Calu3 (cell line): ENCODE measurements at regions of chr12 and their contacts with region 1.

Region 1: GRCh38 chr12:6873094-6874014 is at the start of gene SPSB2:
- DNase-seq: peak; percentile 99
- H3K4me3 Mint-ChIP-seq: peak within 1 kb of the TSS; percentile 99
- H3K27ac Mint-ChIP-seq: peak within 1 kb of the TSS; percentile 89
- H3K4me1 Mint-ChIP-seq: peaks cover 41% of the 10 kb centered on the region
- H3K27me3 Mint-ChIP-seq: no peaks in the 10 kb centered on the region
- CTCF ChIP-seq: no peak
- total RNA-seq, gene SPSB2: 18.0 and 21.5 TPM in 2 replicates

Region 2: GRCh38 chr12:6851921-6852650 is 21.3 kb before region 1 on chr12 and contains the start of gene USP5:
- CTCF ChIA-PET with region 1: interaction called, 15 read pairs
- intact Hi-C with region 1: no loop called
- DNase-seq: peak; percentile 97
- H3K4me3 Mint-ChIP-seq: peak within 1 kb of the TSS; percentile 94
- H3K27ac Mint-ChIP-seq: peak within 1 kb of the TSS; percentile 89
- H3K4me1 Mint-ChIP-seq: peaks cover 27% of the 10 kb centered on the region
- H3K27me3 Mint-ChIP-seq: no peaks in the 10 kb centered on the region
- CTCF ChIP-seq: no peak
- total RNA-seq, gene USP5: 126 and 128 TPM in 2 replicates

Region 3: GRCh38 chr12:6884539-6884938 is 11.2 kb after region 1 on chr12:
- CTCF ChIA-PET with region 1: interaction called, 11 read pairs
- intact Hi-C with region 1: no loop called
- DNase-seq: no peak
- H3K4me3 Mint-ChIP-seq: no peak overlapping the region
- H3K27ac Mint-ChIP-seq: no peak overlapping the region
- H3K4me1 Mint-ChIP-seq: peaks cover 23% of the 10 kb centered on the region
- H3K27me3 Mint-ChIP-seq: no peaks in the 10 kb centered on the region
- CTCF ChIP-seq: no peak

Region 4: GRCh38 chr12:6890789-6891645 is 17.7 kb after region 1 on chr12:
- CTCF ChIA-PET with region 1: interaction called, 31 read pairs
- intact Hi-C with region 1: loop called (anchors 1 kb)
- DNase-seq: peak; percentile 99
- H3K4me3 Mint-ChIP-seq: peak overlapping the region; percentile 70
- H3K27ac Mint-ChIP-seq: peak overlapping the region; percentile 81
- H3K4me1 Mint-ChIP-seq: peaks cover 15% of the 10 kb centered on the region
- H3K27me3 Mint-ChIP-seq: no peaks in the 10 kb centered on the region
- CTCF ChIP-seq: peak; percentile 77

Region 5: GRCh38 chr12:6927379-6928024 is 54.1 kb after region 1 on chr12 and contains the start of gene ATN1:
- CTCF ChIA-PET with region 1: interaction called, 24 read pairs
- intact Hi-C with region 1: loop called (anchors 5 kb)
- DNase-seq: peak; percentile 71
- H3K4me3 Mint-ChIP-seq: peak within 1 kb of the TSS; percentile 83
- H3K27ac Mint-ChIP-seq: peak within 1 kb of the TSS; percentile 68
- H3K4me1 Mint-ChIP-seq: peaks cover 67% of the 10 kb centered on the region
- H3K27me3 Mint-ChIP-seq: no peaks in the 10 kb centered on the region
- CTCF ChIP-seq: no peak
- total RNA-seq, gene ATN1: 59.9 and 62.0 TPM in 2 replicates

Region 6: DNA sequence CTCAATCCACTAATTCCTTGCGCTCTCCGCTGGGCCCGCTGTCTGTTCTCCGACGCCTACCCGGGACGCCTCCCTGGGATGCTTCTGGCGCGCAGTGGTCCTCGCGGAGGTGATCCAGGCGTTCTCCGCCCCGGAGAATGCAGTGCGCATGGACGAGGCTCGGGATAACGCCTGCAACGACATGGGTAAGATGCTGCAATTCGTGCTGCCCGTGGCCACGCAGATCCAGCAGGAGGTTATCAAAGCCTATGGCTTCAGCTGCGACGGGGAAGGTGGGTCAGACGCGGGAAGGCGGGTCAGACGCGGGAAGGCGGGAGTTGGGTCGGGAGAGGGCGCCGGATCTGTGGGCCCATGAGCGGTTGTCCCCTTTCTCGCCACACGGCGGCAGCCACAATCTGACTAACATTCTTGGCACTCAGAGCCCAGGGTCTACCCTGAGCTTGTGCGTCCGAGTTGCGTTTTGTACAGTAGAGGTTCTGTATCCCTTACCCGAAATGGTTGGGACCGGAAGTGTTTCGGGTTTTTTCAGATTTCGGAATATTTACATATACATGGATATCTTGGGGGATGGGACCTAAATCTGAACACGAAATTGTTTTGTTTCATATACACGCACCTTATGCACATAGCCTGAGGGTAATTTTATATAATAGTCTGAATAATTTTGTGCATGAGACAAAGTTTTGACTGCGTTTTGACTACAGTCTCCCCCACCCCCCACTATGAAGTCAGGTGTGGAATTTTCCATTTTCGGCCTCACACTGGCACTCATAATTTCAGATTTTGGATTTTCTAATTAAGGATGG is 71.2 kb after region 1 on chr12:
- CTCF ChIA-PET with region 1: interaction called, 13 read pairs
- intact Hi-C with region 1: loop called (anchors 5 kb)
- DNase-seq: peak; percentile 93
- H3K4me3 Mint-ChIP-seq: peak overlapping the region; percentile 87
- H3K27ac Mint-ChIP-seq: peak overlapping the region; percentile 100
- H3K4me1 Mint-ChIP-seq: peaks cover 49% of the 10 kb centered on the region
- H3K27me3 Mint-ChIP-seq: peaks cover 13% of the 10 kb centered on the region
- CTCF ChIP-seq: peak; percentile 62

Region 7: DNA sequence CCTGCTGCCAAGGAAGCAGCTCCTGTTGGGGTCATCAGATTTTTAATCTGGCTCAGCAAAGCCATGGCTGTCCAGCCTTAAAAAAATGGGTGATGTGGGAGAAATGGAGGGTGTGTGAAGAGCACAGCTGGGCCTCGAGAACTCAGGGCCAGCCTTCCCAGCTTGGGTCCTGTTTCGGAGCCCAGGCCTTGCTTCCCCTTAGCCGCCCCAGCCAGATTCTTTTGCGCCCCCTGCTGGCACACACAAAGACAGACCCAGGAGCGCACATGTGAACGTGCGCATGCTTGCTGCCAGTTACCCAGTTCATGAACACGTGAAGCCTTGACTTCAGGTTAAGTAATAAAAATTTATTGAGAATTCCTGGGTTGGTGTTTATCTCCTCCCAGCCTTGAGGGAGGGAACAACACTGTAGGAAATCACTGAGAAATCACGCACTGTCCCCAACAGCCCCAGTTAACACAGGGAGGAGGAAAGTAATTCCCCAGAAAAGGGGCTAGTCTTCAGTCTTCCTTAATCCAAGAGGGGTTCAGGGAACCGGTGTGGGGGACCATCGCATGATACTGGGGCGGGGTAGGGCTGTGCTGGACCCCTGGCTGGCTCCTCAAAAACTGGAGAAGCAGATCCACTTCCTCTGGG is 91.8 kb after region 1 on chr12:
- CTCF ChIA-PET with region 1: interaction called, 17 read pairs
- intact Hi-C with region 1: no loop called
- DNase-seq: peak; percentile 89
- H3K4me3 Mint-ChIP-seq: peak overlapping the region; percentile 79
- H3K27ac Mint-ChIP-seq: peak overlapping the region; percentile 87
- H3K4me1 Mint-ChIP-seq: peaks cover 50% of the 10 kb centered on the region
- H3K27me3 Mint-ChIP-seq: no peaks in the 10 kb centered on the region
- CTCF ChIP-seq: peak; percentile 90